ENCODE measurements at regions of chr7 and their contacts with region 1.

Region 1: GRCh38 chr7:128121711-128122530 is 90.7 kb upstream of the LRRC4 start:
- DNase-seq: no peak
- H3K4me3 ChIP-seq: no peak overlapping the region
- H3K27ac ChIP-seq: no peak overlapping the region
- H3K4me1 ChIP-seq: no peaks in the 10 kb centered on the region
- H3K27me3 ChIP-seq: no peaks in the 10 kb centered on the region
- CTCF ChIP-seq: no peak

Region 2: DNA sequence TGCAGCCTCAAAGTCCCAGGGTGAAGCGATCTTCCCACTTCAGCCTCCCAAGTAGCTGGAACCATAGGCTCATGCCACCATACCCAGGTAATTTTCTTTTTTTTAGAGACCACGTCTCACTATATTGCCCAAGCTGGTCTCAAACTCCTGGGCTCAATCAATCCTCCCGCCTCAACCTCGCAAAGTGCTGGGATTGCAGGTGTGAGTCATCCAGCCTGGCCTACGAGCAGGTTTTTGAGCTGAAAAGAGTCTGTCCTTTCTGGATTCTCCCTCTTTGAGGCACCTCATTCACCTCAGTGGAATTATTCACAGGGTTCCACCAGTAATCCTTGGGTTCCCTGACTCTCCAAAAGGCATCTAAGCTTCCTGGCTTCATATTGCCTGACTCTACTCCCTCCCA is 111.5 kb after region 1 on chr7:
- CTCF ChIA-PET with region 1: interaction called, 11 read pairs
- POLR2A ChIA-PET with region 1: no interaction called
- intact Hi-C with region 1: no loop called
- DNase-seq: no peak
- H3K4me3 ChIP-seq: no peak overlapping the region
- H3K27ac ChIP-seq: no peak overlapping the region
- H3K4me1 ChIP-seq: peaks cover 13% of the 10 kb centered on the region
- H3K27me3 ChIP-seq: no peaks in the 10 kb centered on the region
- CTCF ChIP-seq: no peak